B cell (primary cell): ENCODE measurements at regions of chr2 and their contacts with region 1.

Region 1: DNA sequence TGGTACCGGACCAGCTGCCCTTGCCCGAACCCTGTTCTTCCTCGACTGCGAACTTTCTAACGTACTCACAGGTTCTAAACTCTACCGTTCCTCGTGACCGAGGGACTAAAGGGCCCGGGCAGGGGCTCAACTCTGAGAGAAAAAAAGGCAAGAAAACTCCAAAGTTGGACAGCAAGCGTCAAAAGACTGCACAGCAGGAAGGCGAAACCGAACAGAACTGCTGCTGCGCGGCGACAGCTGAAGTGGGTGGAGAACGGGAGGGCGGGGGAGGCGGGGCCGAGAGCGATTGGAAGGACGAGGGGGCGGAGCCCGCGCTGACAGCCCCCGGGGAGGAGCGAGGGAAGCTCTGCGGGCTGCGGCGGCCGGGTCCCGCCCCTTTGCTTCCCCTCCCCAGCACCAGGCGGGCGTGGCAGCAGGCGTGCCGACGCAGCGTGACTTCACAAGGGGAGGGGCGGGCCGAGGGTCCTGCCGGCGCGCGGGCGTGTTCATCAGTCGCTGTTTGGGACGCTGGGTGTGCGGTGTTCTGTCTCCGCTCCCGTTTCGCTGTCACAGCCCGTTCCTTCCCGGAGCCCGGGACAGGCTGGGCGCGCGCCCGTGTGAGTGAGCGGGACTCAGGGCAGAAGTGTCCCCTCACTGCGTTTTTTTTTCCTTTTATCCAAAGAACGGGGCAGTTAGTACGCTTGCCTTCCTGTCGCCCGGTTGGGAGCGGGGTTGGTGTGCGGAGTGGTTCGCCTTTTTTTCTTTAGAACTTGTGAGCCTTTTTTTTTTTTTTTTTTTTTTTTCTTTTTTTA is at the start of gene NABP1:
- DNase-seq: peak; percentile 99
- ATAC-seq: peak; percentile 89
- H3K4me3 ChIP-seq: peak within 1 kb of the TSS; percentile 82 to 97 (median 86)
- H3K4me3 Mint-ChIP-seq: peak within 1 kb of the TSS; percentile 99
- H3K27ac ChIP-seq: peak within 1 kb of the TSS; percentile 91 to 95
- H3K27ac Mint-ChIP-seq: peak within 1 kb of the TSS; percentile 100
- H3K4me1 ChIP-seq: peaks cover 44 to 49% of the 10 kb centered on the region in 2 donors
- H3K4me1 Mint-ChIP-seq: peaks cover 51% of the 10 kb centered on the region
- H3K27me3 ChIP-seq: no peaks in the 10 kb centered on the region
- H3K27me3 Mint-ChIP-seq: no peaks in the 10 kb centered on the region
- CTCF ChIP-seq: no peak
- total RNA-seq, gene NABP1: 56.4 and 58.0 TPM in 2 replicates

Region 2: GRCh38 chr2:189783927-189784867 is 1893.6 kb before region 1 on chr2 and contains the starts of genes ORMDL1 and PMS1:
- CTCF ChIA-PET with region 1: no interaction called
- POLR2A ChIA-PET with region 1: no interaction called
- intact Hi-C with region 1: loop called (anchors 5 kb)
- DNase-seq: peak; percentile 98
- ATAC-seq: peak; percentile 90
- H3K4me3 ChIP-seq: peak within 1 kb of the TSS; percentile 66 to 96 (median 79)
- H3K4me3 Mint-ChIP-seq: peak within 1 kb of the TSS; percentile 96
- H3K27ac ChIP-seq: peak within 1 kb of the TSS; percentile 83 to 84
- H3K27ac Mint-ChIP-seq: peak within 1 kb of the TSS; percentile 98
- H3K4me1 ChIP-seq: peaks cover 14 to 21% of the 10 kb centered on the region in 2 donors
- H3K4me1 Mint-ChIP-seq: peaks cover 42% of the 10 kb centered on the region
- H3K27me3 ChIP-seq: no peaks in the 10 kb centered on the region
- H3K27me3 Mint-ChIP-seq: no peaks in the 10 kb centered on the region
- CTCF ChIP-seq: no peak
- total RNA-seq, gene ORMDL1: 166 and 170 TPM in 2 replicates
- total RNA-seq, gene PMS1: 43.6 and 44.2 TPM in 2 replicates

Region 3: DNA sequence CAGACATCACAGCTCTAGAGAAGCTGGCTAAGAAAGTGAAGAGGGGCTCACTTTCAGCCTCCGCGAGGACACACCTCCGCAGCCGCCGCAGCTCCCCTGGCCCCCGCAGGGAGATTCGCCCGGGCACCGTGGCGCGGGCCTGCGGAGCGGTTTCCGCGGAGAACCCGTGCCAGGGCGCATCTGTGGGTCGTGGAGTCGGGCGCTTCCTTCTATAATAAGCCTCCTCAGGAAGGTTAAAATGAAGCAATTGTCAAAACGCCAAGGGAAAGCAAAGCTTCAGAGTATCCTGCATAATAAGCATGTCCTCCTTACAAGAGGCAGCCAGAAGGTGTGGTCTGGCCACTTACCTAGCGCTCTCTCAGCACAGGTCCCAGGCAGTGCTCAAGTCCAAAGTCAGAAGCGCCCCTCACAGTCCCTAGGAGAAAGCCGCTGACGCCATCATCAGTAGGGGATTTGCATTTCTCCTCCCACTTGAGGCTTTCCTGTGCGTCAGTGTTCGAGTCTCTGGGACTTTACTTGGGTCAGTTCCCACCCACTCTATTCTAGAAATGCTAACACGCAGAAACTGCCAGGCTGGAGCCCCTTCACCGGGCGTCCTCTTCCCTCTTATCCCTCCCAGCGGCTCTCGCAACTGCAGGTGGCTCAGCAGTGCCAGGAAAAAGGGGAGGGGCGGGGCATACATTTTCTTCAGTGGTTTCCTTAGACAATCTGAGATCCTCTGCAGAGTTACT is 527.1 kb before region 1 on chr2 and contains the start of gene STAT4:
- CTCF ChIA-PET with region 1: no interaction called
- POLR2A ChIA-PET with region 1: no interaction called
- intact Hi-C with region 1: loop called (anchors 1 kb)
- DNase-seq: peak; percentile 88
- ATAC-seq: peak; percentile 91
- H3K4me3 ChIP-seq: peak within 1 kb of the TSS; percentile 52 to 97 (median 72)
- H3K4me3 Mint-ChIP-seq: peak within 1 kb of the TSS; percentile 94
- H3K27ac ChIP-seq: peak within 1 kb of the TSS; percentile 38 to 53
- H3K27ac Mint-ChIP-seq: peak within 1 kb of the TSS; percentile 85
- H3K4me1 ChIP-seq: peaks cover 3 to 16% of the 10 kb centered on the region in 2 donors
- H3K4me1 Mint-ChIP-seq: peaks cover 30% of the 10 kb centered on the region
- H3K27me3 ChIP-seq: no peaks in the 10 kb centered on the region
- H3K27me3 Mint-ChIP-seq: peaks cover 13% of the 10 kb centered on the region
- CTCF ChIP-seq: no peak
- total RNA-seq, gene STAT4: 58.9 and 62.1 TPM in 2 replicates

Region 4: DNA sequence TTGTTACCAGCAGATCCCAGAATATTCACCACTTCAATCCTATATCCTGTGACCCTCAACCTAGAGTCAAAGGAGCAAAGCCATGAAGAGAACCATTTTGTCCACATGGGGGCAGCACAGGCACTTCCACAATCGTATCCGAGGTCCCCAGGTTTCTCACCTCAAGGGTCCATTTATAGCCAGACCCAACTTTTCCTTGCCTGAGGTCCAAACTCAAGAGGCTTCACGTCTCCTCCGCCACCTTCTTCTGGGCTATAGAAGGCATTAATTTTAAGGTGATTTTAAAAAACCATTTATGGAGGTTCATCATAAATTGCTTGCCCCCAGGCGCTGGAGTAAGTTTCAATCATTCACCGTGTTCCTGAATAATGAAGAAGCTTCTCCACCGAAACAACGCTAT is 111.5 kb before region 1 on chr2:
- CTCF ChIA-PET with region 1: interaction called, 23 read pairs
- POLR2A ChIA-PET with region 1: interaction called, 6 read pairs
- intact Hi-C with region 1: no loop called
- DNase-seq: peak; percentile 78
- ATAC-seq: peak; percentile 76
- H3K4me3 ChIP-seq: no peak overlapping the region
- H3K4me3 Mint-ChIP-seq: no peak overlapping the region
- H3K27ac ChIP-seq: no peak overlapping the region
- H3K27ac Mint-ChIP-seq: no peak overlapping the region
- H3K4me1 ChIP-seq: peaks cover 7 to 12% of the 10 kb centered on the region in 2 donors
- H3K4me1 Mint-ChIP-seq: peaks cover 12% of the 10 kb centered on the region
- H3K27me3 ChIP-seq: no peaks in the 10 kb centered on the region
- H3K27me3 Mint-ChIP-seq: peaks cover 24% of the 10 kb centered on the region
- CTCF ChIP-seq: peak; percentile 86